Mucosa of descending colon (tissue), 3 donors: ENCODE measurements at regions of chr1 and their contacts with region 1.

Region 1: DNA sequence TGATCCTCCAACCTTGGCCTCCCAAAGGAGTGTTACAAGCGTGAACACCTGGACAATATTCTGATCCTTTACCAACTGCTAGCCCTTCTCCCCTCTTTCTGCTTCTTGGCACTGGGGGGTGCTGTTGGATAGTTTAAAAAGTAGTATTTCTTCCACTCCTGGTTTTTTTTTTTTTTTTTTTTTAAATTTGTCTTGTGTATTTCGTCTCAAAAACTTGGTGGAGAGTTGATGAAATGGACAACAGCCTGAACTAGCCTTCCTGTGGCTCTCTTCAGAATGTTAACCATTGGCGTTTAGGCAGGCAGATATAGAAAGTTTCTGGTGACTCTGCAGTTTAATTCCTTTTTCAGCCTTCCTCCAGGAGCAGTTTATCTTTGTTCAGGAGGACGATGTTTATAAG is 69.7 kb upstream of the USP24 start:
- DNase-seq: peak in 1 of 3 donors; percentile 59
- ATAC-seq: peak; percentile 47
- H3K4me3 ChIP-seq: no peak overlapping the region
- H3K4me1 ChIP-seq: no peaks in the 10 kb centered on the region
- CTCF ChIP-seq: no peak

Region 2: GRCh38 chr1:55337801-55338447 is 53.1 kb after region 1 on chr1:
- intact Hi-C with region 1: loop called in 1 of 2 experiments (anchors 5 kb)
- DNase-seq: peak in 1 of 3 donors; percentile 34
- ATAC-seq: peak; percentile 77
- H3K4me3 ChIP-seq: no peak overlapping the region
- H3K4me1 ChIP-seq: no peaks in the 10 kb centered on the region
- CTCF ChIP-seq: no peak

Region 3: DNA sequence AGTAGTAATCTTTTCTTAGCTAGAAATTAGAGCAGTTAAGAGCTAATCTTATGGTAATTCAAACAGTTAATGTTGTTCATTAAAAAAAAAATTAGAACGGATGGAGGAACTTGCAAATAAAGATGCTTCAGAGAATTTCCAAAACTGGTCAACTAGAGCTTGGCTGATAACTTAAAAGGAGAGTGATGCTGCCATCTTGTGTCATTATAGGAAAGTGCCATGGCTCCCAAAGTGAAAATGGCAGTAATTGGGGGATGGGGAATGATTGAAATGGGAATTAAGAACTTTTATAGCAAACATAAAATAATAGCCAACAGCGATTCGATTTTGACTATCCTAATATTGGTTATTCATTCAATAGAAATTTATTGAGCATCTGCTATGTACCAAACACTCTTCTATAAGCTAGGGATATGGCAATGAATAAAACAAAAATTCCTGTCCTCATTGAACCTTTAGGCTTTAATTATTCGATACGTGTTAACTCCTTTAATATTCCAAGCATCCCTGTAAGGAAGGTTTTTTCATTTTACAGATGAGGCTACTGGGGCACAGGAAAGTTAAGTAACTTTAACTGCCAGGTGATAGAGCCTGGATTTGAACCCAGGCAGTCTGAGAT is 1300.2 kb after region 1 on chr1:
- intact Hi-C with region 1: loop called (anchors 5 to 10 kb)
- DNase-seq: peak in 1 of 3 donors; percentile 66
- ATAC-seq: peak; percentile 64
- H3K4me3 ChIP-seq: no peak overlapping the region
- H3K4me1 ChIP-seq: no peaks in the 10 kb centered on the region
- CTCF ChIP-seq: peak; percentile 40

Region 4: DNA sequence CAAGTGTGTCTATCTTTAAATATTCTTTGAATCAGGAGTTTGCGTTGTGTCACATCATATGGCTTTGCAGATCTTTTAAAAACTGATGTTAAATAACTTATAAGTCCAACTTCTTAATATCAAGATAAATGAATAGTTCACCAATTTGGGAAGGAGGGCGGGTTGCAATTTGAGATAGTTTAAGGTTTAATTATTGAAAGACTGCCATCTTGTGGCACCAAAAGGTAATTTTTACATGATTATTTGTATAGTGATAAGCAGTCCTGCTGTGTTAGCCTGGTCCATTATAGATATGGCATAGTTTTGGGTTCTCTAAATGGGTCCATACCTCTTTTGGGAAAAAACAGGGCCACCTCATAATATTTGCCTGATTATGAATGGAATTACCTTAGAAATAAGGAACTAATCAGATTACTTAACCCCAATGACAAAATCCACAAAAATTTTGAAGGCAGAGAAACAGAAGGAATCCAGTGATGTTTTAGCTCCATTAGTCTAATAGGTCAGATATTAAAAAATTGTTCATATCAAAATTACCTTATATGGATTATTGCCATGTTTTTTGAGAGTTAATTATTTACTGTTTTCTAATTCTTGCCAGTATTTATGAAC is 1424.5 kb after region 1 on chr1:
- intact Hi-C with region 1: loop called in 1 of 2 experiments (anchors 10 kb)
- DNase-seq: peak in 1 of 3 donors; percentile 56
- ATAC-seq: peak; percentile 50
- H3K4me3 ChIP-seq: no peak overlapping the region
- H3K4me1 ChIP-seq: no peaks in the 10 kb centered on the region
- CTCF ChIP-seq: peak; percentile 26